B cell (primary cell): ENCODE measurements at regions of chr6 and their contacts with region 1.

Region 1: GRCh38 chr6:132354512-132355167 is 46.6 kb downstream of the MOXD1 start:
- DNase-seq: peak; percentile 94
- ATAC-seq: peak; percentile 87
- H3K4me3 ChIP-seq: peak overlapping the region in 4 of 5 experiments; percentile 10 to 37 (median 17)
- H3K4me3 Mint-ChIP-seq: peak overlapping the region; percentile 67
- H3K27ac ChIP-seq: peak overlapping the region; percentile 89 to 95
- H3K27ac Mint-ChIP-seq: peak overlapping the region; percentile 89
- H3K4me1 ChIP-seq: peaks cover 43 to 63% of the 10 kb centered on the region in 2 donors
- H3K4me1 Mint-ChIP-seq: peaks cover 67% of the 10 kb centered on the region
- H3K27me3 ChIP-seq: no peaks in the 10 kb centered on the region
- H3K27me3 Mint-ChIP-seq: no peaks in the 10 kb centered on the region
- CTCF ChIP-seq: no peak

Region 2: GRCh38 chr6:132365281-132365907 is 10.8 kb after region 1 on chr6:
- CTCF ChIA-PET with region 1: interaction called, 9 read pairs
- POLR2A ChIA-PET with region 1: interaction called, 10 read pairs
- intact Hi-C with region 1: loop called (anchors 1 kb)
- DNase-seq: peak; percentile 45
- ATAC-seq: peak; percentile 63
- H3K4me3 ChIP-seq: peak overlapping the region in 1 of 5 experiments; percentile 21
- H3K4me3 Mint-ChIP-seq: peak overlapping the region; percentile 71
- H3K27ac ChIP-seq: peak overlapping the region; percentile 57 to 70
- H3K27ac Mint-ChIP-seq: peak overlapping the region; percentile 86
- H3K4me1 ChIP-seq: peaks cover 29 to 52% of the 10 kb centered on the region in 2 donors
- H3K4me1 Mint-ChIP-seq: peaks cover 55% of the 10 kb centered on the region
- H3K27me3 ChIP-seq: no peaks in the 10 kb centered on the region
- H3K27me3 Mint-ChIP-seq: no peaks in the 10 kb centered on the region
- CTCF ChIP-seq: no peak

Region 3: GRCh38 chr6:132391391-132392271 is 37.0 kb after region 1 on chr6:
- CTCF ChIA-PET with region 1: interaction called, 68 read pairs
- POLR2A ChIA-PET with region 1: no interaction called
- intact Hi-C with region 1: no loop called
- DNase-seq: no peak
- ATAC-seq: no peak
- H3K4me3 ChIP-seq: no peak overlapping the region
- H3K4me3 Mint-ChIP-seq: no peak overlapping the region
- H3K27ac ChIP-seq: no peak overlapping the region
- H3K27ac Mint-ChIP-seq: no peak overlapping the region
- H3K4me1 ChIP-seq: peaks cover 5 to 27% of the 10 kb centered on the region in 2 donors
- H3K4me1 Mint-ChIP-seq: peaks cover 27% of the 10 kb centered on the region
- H3K27me3 ChIP-seq: no peaks in the 10 kb centered on the region
- H3K27me3 Mint-ChIP-seq: no peaks in the 10 kb centered on the region
- CTCF ChIP-seq: no peak

Region 4: GRCh38 chr6:132483779-132484679 is 129.4 kb after region 1 on chr6:
- CTCF ChIA-PET with region 1: interaction called, 16 read pairs
- POLR2A ChIA-PET with region 1: no interaction called
- intact Hi-C with region 1: loop called (anchors 5 kb)
- DNase-seq: peak; percentile 83
- ATAC-seq: peak; percentile 78
- H3K4me3 ChIP-seq: peak overlapping the region in 1 of 5 experiments; percentile 5
- H3K4me3 Mint-ChIP-seq: peak overlapping the region; percentile 41
- H3K27ac ChIP-seq: peak overlapping the region; percentile 27 to 92
- H3K27ac Mint-ChIP-seq: peak overlapping the region; percentile 75
- H3K4me1 ChIP-seq: peaks cover 59 to 88% of the 10 kb centered on the region in 2 donors
- H3K4me1 Mint-ChIP-seq: peaks cover 85% of the 10 kb centered on the region
- H3K27me3 ChIP-seq: no peaks in the 10 kb centered on the region
- H3K27me3 Mint-ChIP-seq: no peaks in the 10 kb centered on the region
- CTCF ChIP-seq: peak; percentile 84

Region 5: GRCh38 chr6:132512638-132513632 is 158.3 kb after region 1 on chr6 and contains the start of gene STX7:
- CTCF ChIA-PET with region 1: no interaction called
- POLR2A ChIA-PET with region 1: interaction called, 13 read pairs
- intact Hi-C with region 1: loop called (anchors 1 kb)
- DNase-seq: peak; percentile 94
- ATAC-seq: peak; percentile 79
- H3K4me3 ChIP-seq: peak within 1 kb of the TSS; percentile 59 to 98 (median 85)
- H3K4me3 Mint-ChIP-seq: peak within 1 kb of the TSS; percentile 93
- H3K27ac ChIP-seq: peak within 1 kb of the TSS; percentile 90 to 92
- H3K27ac Mint-ChIP-seq: peak within 1 kb of the TSS; percentile 95
- H3K4me1 ChIP-seq: peaks cover 33 to 36% of the 10 kb centered on the region in 2 donors
- H3K4me1 Mint-ChIP-seq: peaks cover 56% of the 10 kb centered on the region
- H3K27me3 ChIP-seq: no peaks in the 10 kb centered on the region
- H3K27me3 Mint-ChIP-seq: no peaks in the 10 kb centered on the region
- CTCF ChIP-seq: peak; percentile 12
- total RNA-seq, gene STX7: 221 and 227 TPM in 2 replicates

Region 6: GRCh38 chr6:132813173-132813856 is 458.7 kb after region 1 on chr6:
- CTCF ChIA-PET with region 1: no interaction called
- POLR2A ChIA-PET with region 1: no interaction called
- intact Hi-C with region 1: loop called (anchors 5 kb)
- DNase-seq: peak; percentile 75
- ATAC-seq: peak; percentile 18
- H3K4me3 ChIP-seq: peak overlapping the region; percentile 72 to 100 (median 83)
- H3K4me3 Mint-ChIP-seq: peak overlapping the region; percentile 98
- H3K27ac ChIP-seq: peak overlapping the region; percentile 65 to 82
- H3K27ac Mint-ChIP-seq: peak overlapping the region; percentile 98
- H3K4me1 ChIP-seq: peaks cover 25% of the 10 kb centered on the region in 2 donors
- H3K4me1 Mint-ChIP-seq: peaks cover 47% of the 10 kb centered on the region
- H3K27me3 ChIP-seq: no peaks in the 10 kb centered on the region
- H3K27me3 Mint-ChIP-seq: no peaks in the 10 kb centered on the region
- CTCF ChIP-seq: no peak